GM10248 (cell line): ENCODE measurements at regions of chr2 and their contacts with region 1.

Region 1: DNA sequence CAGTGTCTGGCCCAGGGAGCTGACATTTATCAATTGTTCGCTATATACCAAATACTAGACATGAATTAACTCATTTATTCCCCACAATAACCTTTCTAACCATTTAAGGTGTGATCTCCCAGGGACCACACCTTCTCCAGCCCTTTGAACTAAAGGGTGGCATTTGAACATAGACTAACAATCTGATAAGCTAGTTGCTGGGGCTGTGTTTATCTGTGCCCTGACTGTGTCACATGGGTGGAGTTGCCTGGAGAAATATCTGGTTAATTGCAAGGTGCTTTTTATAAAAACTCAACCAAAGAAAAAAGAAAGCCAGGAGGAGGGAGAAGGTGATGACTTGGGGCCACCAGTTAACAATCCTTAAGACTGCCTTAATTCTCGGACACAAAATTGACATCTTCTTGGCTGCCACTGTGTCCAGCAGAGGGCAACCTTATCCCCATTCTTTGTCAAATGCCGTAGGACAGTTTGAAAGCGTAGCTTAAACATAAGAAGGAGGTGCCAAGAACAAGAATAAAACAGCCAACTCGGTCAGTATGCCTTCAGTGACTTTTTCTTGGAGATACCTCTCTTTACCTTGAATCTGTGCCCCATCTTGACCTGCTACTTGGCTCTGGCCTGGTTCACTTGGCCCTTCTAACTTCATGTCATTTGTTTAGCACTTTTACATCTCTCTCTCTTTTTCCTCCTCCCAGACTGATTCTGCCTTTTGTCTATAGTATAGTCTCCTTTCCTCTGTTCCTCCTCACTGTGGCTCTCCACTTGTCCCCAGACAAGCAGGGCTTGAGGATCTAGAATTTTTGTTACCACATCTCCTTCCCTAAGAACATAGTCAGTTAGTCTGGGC is 183.4 kb downstream of the MYO3B start:
- DNase-seq: peak; percentile 26
- CTCF ChIP-seq: peak; percentile 81

Region 2: DNA sequence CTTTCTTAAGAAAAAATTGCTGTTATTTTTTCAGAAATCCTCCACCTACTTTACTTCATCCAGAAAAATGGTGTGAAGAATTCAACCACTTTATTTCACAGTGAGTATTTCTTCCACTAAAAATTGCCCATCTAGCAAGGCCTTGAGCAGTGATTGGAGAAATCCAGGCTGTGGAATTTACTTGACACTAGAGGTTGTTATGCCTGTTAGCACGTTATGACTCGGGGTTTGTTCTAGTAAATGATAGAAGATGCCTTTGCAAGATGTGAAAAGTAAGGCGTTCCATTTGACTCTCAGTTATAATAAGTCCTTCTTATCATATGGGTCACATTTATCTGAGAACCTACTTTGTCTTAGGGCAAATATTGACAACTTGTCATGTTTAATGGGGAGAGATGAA is 26.0 kb before region 1 on chr2:
- CTCF ChIA-PET with region 1: interaction called, 16 read pairs
- POLR2A ChIA-PET with region 1: no interaction called
- DNase-seq: no peak
- CTCF ChIP-seq: no peak

Region 3: GRCh38 chr2:170341684-170342623 is 19.4 kb before region 1 on chr2:
- CTCF ChIA-PET with region 1: interaction called, 18 read pairs
- POLR2A ChIA-PET with region 1: no interaction called
- DNase-seq: no peak
- CTCF ChIP-seq: no peak

Region 4: DNA sequence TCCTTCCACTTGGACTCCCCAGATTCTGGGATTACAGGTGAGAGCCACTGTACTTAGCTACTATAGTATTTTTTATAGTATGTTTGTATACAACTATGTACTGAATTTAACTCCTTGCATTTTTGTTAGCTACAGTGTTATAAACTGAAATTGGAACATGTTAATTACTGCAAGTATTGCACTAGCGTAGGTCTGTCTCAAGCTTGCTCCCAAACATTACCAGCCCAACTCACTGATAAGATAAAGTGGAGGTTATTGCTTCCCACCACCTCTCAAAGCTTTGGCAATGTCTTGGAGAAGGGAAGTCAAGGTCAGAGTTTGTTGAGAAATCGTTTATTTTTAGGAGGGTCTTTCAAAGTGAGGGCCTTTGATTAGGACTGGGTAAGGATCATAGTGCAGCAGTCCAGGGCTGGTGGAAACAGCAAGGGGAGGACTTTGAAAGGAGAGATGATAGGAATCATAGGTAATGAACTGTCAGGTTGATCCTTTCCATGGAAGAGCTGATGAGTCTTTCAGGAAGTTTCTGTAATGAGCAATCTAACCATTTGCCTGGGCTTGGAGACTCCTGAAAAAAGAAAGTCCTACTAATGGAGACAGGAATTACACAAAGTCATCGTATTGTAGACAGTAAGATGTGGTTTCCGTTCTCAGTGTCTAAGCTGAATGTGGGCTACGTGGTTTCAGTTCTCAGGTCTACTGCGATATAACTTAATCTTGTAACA is 73.7 kb after region 1 on chr2:
- CTCF ChIA-PET with region 1: no interaction called
- POLR2A ChIA-PET with region 1: no interaction called
- DNase-seq: peak; percentile 22
- CTCF ChIP-seq: no peak

Region 5: DNA sequence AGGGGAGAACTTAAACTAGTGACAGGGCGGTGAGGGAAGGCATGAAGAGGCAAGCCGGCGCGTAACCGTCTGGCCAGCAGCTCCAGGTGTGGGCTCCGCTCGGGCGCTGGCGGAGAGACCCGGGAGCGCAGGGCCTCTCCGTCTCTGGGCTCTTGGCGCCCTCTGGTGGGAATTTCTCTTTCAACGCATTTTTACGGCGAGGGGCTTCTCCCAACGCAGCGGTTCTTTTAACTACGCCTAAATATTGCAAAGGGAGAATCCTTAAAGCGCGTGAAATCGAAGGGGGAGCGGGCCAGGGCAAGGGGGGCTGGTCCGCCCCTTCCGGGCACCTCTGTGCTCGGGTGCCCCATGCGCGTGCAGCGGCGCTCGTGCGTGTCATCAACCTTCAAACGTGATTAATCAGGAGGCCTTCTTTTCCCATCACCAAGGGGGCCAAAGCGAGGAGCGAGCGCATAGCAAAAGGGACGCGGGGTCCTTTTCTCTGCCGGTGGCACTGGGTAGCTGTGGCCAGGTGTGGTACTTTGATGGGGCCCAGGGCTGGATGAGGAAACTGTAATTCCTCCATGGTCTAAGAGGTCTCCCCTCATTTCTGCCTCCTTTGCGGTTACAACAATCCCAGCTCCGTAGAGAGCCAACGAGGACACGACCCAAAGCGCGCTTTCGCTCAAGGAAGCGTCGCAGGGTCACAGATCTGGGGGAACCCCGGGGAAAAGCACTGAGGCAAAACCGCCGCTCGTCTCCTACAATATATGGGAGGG is 454.6 kb after region 1 on chr2:
- CTCF ChIA-PET with region 1: interaction called, 36 read pairs
- POLR2A ChIA-PET with region 1: no interaction called
- DNase-seq: peak; percentile 80
- CTCF ChIP-seq: peak; percentile 70